RWPE1 (cell line): ENCODE measurements at regions of chr15 and their contacts with region 1.

Region 1: GRCh38 chr15:57220205-57220604 is 156.1 kb upstream of the CGNL1 start:
- DNase-seq: no peak
- H3K27ac ChIP-seq: no peak overlapping the region
- CTCF ChIP-seq: no peak

Region 2: GRCh38 chr15:55661428-55661827 is 1558.8 kb before region 1 on chr15:
- CTCF ChIA-PET with region 1: no interaction called
- POLR2A ChIA-PET with region 1: no interaction called
- DNase-seq: no peak
- H3K27ac ChIP-seq: no peak overlapping the region
- CTCF ChIP-seq: no peak

Region 3: GRCh38 chr15:57134851-57135250 is 85.4 kb before region 1 on chr15:
- CTCF ChIA-PET with region 1: interaction called, 10 read pairs
- POLR2A ChIA-PET with region 1: no interaction called
- DNase-seq: no peak
- H3K27ac ChIP-seq: no peak overlapping the region
- CTCF ChIP-seq: no peak